A549 (cell line): ENCODE measurements at regions of chr19 and their contacts with region 1.

Region 1: DNA sequence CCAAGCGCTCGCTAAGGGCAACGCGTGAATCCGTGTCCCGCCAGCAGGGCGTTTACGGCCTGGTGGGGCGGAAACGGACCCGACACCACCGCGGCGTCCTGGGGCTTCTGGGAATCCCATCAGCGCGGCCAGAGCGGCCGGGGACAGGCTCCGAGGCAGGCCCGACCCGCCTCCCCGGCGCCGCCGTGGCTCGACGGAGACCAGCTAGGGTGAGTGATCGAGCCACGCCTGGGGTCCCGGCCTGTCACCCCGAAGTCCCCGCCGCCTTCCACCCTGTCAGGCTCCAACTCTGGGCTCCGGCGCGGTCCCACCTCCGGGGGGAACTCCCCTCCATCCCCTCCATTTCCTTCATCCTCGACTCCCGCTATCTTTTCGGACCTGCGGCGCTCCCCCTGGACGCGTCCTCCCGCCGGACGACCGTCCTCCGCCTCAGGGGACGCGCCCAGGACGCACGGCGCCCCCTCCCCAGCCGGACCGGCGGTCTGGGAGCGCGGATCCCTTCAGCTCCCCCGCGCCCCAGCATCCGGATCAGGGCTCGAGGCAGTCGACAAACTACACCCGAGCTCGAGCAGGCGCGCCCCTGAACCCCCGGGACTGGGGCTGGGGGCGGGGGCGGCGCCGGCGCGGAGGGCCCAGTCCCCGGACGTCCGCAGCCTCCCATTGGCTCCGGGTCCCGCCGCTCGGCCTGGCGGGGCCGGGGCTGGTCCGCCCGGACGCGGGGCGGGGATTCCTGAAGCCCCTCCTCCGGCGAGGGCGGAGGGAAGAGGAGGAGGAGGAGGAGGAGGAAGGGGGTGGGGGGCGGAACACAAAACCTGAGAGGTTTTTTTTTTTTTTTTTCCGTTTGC is 638 bp upstream of the BICRA start:
- DNase-seq: peak; percentile 94
- ATAC-seq: peak; percentile 85 to 93
- H3K4me3 ChIP-seq: peak overlapping the region; percentile 92
- H3K27ac ChIP-seq: peak overlapping the region; percentile 93 to 96
- H3K4me1 ChIP-seq: peaks cover 21% of the 10 kb centered on the region
- CTCF ChIP-seq: no peak
- EP300 ChIP-seq: no peak
- POLR2A ChIP-seq: peak; percentile 73
- RAD21 ChIP-seq: no peak

Region 2: GRCh38 chr19:47471733-47472457 is 136.4 kb before region 1 on chr19 and contains the start of gene SLC8A2:
- CTCF ChIA-PET with region 1: no interaction called
- POLR2A ChIA-PET with region 1: no interaction called
- DNase-seq: peak; percentile 75 to 76
- ATAC-seq: peak; percentile 17 to 56; a peak in 5 of 6 replicates
- H3K4me3 ChIP-seq: peak within 1 kb of the TSS; percentile 41
- H3K27ac ChIP-seq: peak within 1 kb of the TSS in 1 of 2 experiments; percentile 69; a peak in 2 of 6 replicates
- H3K4me1 ChIP-seq: peaks cover 19% of the 10 kb centered on the region; the same call in 2 of the 3 replicates
- CTCF ChIP-seq: no peak
- EP300 ChIP-seq: no peak
- POLR2A ChIP-seq: no peak
- RAD21 ChIP-seq: no peak
- polyA plus RNA-seq, gene SLC8A2: 0.12 and 0.35 TPM in 2 replicates

Region 3: GRCh38 chr19:47618771-47619170 is 10.5 kb after region 1 on chr19:
- CTCF ChIA-PET with region 1: interaction called, 10 read pairs
- POLR2A ChIA-PET with region 1: interaction called, 3 read pairs
- DNase-seq: no peak
- ATAC-seq: no peak
- H3K4me3 ChIP-seq: no peak overlapping the region
- H3K27ac ChIP-seq: no peak overlapping the region
- H3K4me1 ChIP-seq: peaks cover 19% of the 10 kb centered on the region; the same call in 2 of the 3 replicates
- CTCF ChIP-seq: no peak
- EP300 ChIP-seq: no peak
- POLR2A ChIP-seq: no peak
- RAD21 ChIP-seq: no peak

Region 4: GRCh38 chr19:47623921-47624391 is 15.7 kb after region 1 on chr19:
- CTCF ChIA-PET with region 1: interaction called, 14 read pairs
- POLR2A ChIA-PET with region 1: interaction called, 3 read pairs
- DNase-seq: no peak
- ATAC-seq: no peak; a peak in 1 of 6 replicates
- H3K4me3 ChIP-seq: no peak overlapping the region
- H3K27ac ChIP-seq: peak overlapping the region in 1 of 2 experiments; percentile 11; a peak in 1 of 6 replicates
- H3K4me1 ChIP-seq: peaks cover 22% of the 10 kb centered on the region; the same call in 2 of the 3 replicates
- CTCF ChIP-seq: no peak
- EP300 ChIP-seq: no peak
- POLR2A ChIP-seq: no peak
- RAD21 ChIP-seq: no peak